Left ventricle myocardium superior (tissue), 1 donor: ENCODE measurements at regions of chr2 and their contacts with region 1.

Region 1: GRCh38 chr2:16608661-16609643 is 56.7 kb downstream of the CYRIA start:
- DNase-seq: peak; percentile 88
- ATAC-seq: peak; percentile 88

Region 2: GRCh38 chr2:15636972-15637785 is 971.8 kb before region 1 on chr2:
- intact Hi-C with region 1: loop called (anchors 5 kb)
- DNase-seq: peak; percentile 78
- ATAC-seq: peak; percentile 87

Region 3: DNA sequence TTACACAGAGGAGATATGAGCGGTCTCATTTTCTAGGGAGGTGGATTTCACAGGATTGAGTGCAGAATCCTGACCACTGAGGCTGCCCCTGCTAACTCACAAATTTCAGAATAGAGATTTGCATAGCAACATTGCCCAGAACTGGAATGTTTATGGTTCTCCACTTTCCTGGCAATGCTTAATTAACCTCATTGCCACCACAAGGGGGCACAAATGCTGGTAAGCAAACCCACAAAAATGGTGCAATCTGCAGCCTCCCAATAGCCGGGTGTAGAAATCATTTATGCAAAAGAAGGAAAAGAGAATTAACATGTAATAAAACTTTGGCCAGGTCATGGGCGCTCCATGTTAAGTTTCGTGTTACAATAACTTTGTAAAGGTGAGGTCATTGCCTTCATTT is 55.7 kb before region 1 on chr2:
- intact Hi-C with region 1: loop called (anchors 5 kb)
- DNase-seq: no peak
- ATAC-seq: peak; percentile 47

Region 4: GRCh38 chr2:16756831-16757644 is 148.1 kb after region 1 on chr2:
- intact Hi-C with region 1: loop called (anchors 2 kb)
- DNase-seq: peak; percentile 85
- ATAC-seq: peak; percentile 90